OCI-LY7 (cell line): ENCODE measurements at regions of chr10 and their contacts with region 1.

Region 1: DNA sequence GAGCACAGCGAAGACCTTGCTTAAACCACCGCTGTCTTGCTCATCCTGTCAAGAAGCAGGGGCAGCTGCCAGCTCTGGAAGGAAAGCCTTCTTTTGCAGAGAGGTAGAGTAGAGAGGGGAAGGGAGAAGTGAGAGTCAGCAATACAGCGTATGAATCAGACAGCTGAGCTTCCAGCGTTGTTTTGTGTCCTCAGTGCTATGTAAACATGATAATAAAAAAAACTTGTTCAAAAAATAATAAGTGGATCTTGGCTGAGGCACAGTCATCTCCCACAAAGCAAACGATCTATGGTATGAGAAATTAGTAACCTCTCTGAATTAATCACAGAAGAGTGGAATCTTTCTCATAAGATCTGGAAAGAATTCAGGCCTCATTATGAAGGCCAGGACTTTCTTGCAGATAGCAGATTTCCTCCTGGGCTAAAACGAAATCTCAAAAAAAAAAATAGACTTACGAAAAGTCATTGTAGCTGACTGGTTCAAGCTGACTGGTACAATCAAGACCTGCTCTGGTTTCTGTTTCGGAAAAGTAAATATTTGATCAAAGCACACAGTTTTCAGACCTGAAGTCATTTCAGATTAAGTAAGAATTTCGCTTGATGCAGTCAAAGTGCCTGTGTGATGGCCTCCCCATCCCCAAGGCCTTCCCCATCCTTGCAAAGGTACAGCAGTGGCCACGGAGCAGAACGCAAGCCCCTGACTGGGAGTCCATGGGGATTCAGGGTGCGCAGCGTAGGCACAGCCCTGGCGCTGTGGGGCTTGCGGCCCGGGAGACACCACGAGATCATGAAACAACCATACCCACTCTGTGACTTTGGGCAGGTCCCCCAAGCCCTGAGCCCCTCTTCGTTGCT is 29.4 kb downstream of the CHST15 start:
- DNase-seq: peak; percentile 74
- H3K4me3 ChIP-seq: peak overlapping the region; percentile 57
- H3K27ac ChIP-seq: peak overlapping the region; percentile 85
- H3K4me1 ChIP-seq: peaks cover 72% of the 10 kb centered on the region
- CTCF ChIP-seq: no peak

Region 2: DNA sequence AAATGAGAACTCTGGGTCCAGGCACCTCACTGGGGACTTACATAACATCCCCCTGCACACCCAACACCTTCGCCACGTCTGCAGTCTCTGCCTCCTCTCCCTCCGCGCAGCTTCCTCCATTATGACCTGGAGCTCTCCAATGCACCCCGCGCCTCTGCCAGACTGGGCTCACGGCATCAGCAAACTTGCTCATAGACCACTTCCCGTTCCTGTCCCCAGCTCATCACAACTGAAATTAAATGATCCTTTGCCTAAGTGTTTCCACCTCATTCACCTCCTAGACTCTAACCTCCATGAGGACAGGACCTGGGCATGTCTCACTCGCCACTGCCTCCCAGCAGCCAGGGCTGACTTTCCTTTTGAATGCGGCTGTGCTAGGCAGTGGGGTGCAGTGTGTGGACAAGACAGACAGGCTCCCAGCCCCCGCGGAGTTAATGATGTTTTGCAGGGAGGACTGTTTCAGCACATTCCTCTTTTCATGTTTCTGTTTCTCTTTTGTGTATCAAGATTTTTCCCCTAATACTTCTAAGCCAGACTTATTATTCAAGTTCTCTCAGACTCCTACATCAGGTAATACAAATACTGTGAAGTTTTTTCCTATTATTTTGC is 10.6 kb after region 1 on chr10:
- CTCF ChIA-PET with region 1: interaction called, 3 read pairs
- POLR2A ChIA-PET with region 1: interaction called, 54 read pairs
- intact Hi-C with region 1: no loop called
- DNase-seq: peak; percentile 65
- H3K4me3 ChIP-seq: peak overlapping the region; percentile 25
- H3K27ac ChIP-seq: peak overlapping the region; percentile 88
- H3K4me1 ChIP-seq: peaks cover 98% of the 10 kb centered on the region
- CTCF ChIP-seq: no peak